WTC11 (cell line): ENCODE measurements at regions of chr3 and their contacts with region 1.

Region 1: DNA sequence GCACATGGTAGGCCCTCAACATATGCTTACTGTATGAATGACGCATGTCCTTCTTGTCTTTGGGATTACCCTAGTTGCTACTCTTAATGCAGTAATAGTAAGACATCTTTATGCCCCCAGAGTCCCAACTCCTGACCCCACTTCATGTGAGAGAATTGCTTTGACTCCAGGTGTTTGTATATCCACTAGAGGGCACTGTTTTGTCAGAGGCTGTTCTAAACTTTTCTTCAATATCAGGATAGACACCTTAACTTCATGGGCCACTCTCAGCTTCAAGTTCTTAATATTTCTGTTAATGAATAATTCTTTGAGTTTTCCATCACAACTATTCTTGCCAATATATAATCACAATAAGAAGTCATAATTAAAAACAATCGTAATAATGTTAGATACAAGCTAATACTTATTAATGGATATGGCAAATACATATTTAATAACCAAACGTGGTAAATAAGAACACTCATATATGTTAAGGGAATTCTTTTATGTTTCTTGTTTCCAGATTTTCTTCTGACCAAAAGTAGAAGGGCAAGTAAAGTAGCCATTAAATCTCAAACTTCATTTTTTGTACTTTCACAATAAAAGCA is 337.2 kb upstream of the DNAJC19 start:
- DNase-seq: no peak
- ATAC-seq: peak; percentile 55; the same call in 1 of the 2 replicates
- H3K4me3 Mint-ChIP-seq: no peak overlapping the region
- H3K27ac Mint-ChIP-seq: no peak overlapping the region
- H3K4me1 Mint-ChIP-seq: peaks cover 20% of the 10 kb centered on the region
- H3K27me3 Mint-ChIP-seq: no peaks in the 10 kb centered on the region
- CTCF ChIP-seq: peak; percentile 62

Region 2: DNA sequence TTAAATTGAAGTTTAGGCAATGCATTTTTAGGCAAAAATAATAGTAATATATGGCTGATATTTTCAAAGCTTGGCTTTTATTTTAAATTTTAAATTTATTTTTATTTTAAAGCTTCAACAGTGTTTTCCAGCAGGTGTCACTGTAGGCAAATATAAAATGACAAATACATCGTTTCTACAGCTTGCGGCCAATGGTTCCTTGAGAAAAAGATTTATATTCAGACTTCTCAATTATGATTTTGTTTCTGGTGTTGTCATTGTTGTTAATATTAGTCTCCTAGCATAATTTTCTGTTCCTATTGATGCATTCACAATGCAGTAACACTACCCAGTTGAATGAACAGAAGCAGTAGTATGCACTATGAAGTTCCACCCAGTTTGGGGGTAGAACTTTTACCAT is 116.5 kb before region 1 on chr3:
- CTCF ChIA-PET with region 1: interaction called, 14 read pairs
- POLR2A ChIA-PET with region 1: no interaction called
- DNase-seq: no peak
- ATAC-seq: no peak
- H3K4me3 Mint-ChIP-seq: no peak overlapping the region
- H3K27ac Mint-ChIP-seq: no peak overlapping the region
- H3K4me1 Mint-ChIP-seq: no peaks in the 10 kb centered on the region
- H3K27me3 Mint-ChIP-seq: no peaks in the 10 kb centered on the region
- CTCF ChIP-seq: no peak

Region 3: DNA sequence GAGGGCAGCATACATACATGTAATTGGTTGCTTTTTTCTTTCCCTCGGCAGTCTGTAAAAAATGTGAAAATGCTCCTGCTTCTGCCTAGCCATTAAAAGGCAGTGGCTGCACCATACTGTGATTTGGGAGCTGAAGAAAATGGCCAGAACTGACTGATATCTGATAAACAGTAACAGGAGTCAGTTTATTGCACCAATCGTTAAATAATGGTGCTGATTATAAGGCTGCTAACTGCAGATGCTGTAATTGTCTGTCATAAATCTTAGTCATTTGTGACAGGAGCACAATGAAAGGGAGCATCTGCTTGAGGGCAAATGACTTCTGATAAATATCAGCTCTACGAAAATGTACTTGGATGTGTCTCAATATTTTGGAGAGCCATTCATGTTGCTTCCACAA is 74.1 kb before region 1 on chr3:
- CTCF ChIA-PET with region 1: no interaction called
- POLR2A ChIA-PET with region 1: no interaction called
- DNase-seq: no peak
- ATAC-seq: no peak
- H3K4me3 Mint-ChIP-seq: no peak overlapping the region
- H3K27ac Mint-ChIP-seq: no peak overlapping the region
- H3K4me1 Mint-ChIP-seq: peaks cover 25% of the 10 kb centered on the region
- H3K27me3 Mint-ChIP-seq: no peaks in the 10 kb centered on the region
- CTCF ChIP-seq: no peak

Region 4: GRCh38 chr3:181316486-181316885 is 10.2 kb before region 1 on chr3:
- CTCF ChIA-PET with region 1: interaction called, 12 read pairs
- POLR2A ChIA-PET with region 1: no interaction called
- DNase-seq: no peak
- ATAC-seq: no peak
- H3K4me3 Mint-ChIP-seq: no peak overlapping the region
- H3K27ac Mint-ChIP-seq: no peak overlapping the region
- H3K4me1 Mint-ChIP-seq: peaks cover 16% of the 10 kb centered on the region
- H3K27me3 Mint-ChIP-seq: peaks cover 3% of the 10 kb centered on the region; the same call in 1 of the 2 replicates
- CTCF ChIP-seq: no peak